ENCODE measurements at regions of chr3 and their contacts with region 1.

Region 1: GRCh38 chr3:141796081-141796888 is 33.1 kb downstream of the GRK7 start:
- DNase-seq: peak; percentile 80
- H3K4me3 Mint-ChIP-seq: peak overlapping the region; percentile 84
- H3K27ac Mint-ChIP-seq: peak overlapping the region; percentile 97
- H3K4me1 Mint-ChIP-seq: peaks cover 46% of the 10 kb centered on the region
- H3K27me3 Mint-ChIP-seq: peaks cover 3% of the 10 kb centered on the region

Region 2: DNA sequence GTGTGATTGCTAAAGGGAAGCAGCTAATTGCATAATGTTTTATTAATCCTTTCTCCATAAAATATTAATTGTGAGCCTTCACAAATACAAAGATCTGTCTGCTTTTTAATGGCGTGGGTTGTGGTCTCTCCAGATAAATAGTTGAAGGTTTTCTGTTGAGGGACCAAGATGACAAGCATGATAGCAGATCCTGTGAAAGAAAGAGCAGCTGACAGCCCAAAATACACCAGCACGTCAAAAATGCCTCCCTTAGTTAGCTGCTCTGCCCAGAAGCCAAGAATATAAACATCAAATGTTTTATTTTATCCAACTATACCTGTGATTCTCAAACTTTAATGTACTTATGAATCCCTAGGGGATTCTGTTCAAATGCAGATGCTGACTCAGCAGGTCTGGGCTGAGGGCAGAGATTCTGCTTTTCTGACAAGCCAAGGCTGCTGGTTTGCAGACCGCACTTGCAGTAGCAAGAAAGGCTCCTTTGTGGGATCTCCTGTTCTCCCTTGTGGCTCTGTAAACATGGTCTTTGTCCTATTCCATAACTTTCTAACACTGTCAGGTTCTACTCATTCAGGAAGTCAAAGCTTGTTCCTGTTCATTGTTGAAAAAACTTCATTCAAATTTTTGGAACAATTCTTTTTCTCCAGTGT is 973.8 kb before region 1 on chr3:
- CTCF ChIA-PET with region 1: no interaction called
- POLR2A ChIA-PET with region 1: no interaction called
- DNase-seq: no peak
- H3K4me3 Mint-ChIP-seq: no peak overlapping the region
- H3K27ac Mint-ChIP-seq: no peak overlapping the region
- H3K4me1 Mint-ChIP-seq: no peaks in the 10 kb centered on the region
- H3K27me3 Mint-ChIP-seq: no peaks in the 10 kb centered on the region

Region 3: GRCh38 chr3:141266797-141267555 is 529.3 kb before region 1 on chr3:
- CTCF ChIA-PET with region 1: no interaction called
- POLR2A ChIA-PET with region 1: no interaction called
- DNase-seq: peak; percentile 52
- H3K4me3 Mint-ChIP-seq: peak overlapping the region; percentile 76
- H3K27ac Mint-ChIP-seq: peak overlapping the region; percentile 92
- H3K4me1 Mint-ChIP-seq: peaks cover 43% of the 10 kb centered on the region
- H3K27me3 Mint-ChIP-seq: no peaks in the 10 kb centered on the region

Region 4: DNA sequence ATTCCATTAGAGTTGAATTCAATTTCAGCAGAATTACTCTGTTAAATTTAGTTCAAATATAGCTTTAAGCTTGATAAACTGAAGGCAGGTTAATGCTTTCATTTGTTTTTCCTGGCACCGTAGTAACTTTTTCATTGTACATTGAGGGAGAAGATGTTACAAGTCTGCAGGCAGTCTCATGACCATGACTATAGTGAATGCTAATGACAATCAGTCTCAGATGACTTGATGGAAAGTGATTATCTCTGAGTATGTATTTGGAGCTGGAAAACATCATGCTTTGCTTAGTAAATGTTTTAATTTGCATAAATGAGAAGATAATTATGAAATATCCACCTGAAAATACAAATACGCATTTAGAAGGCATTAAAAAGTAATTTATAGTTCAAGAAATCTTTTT is 74.2 kb before region 1 on chr3:
- CTCF ChIA-PET with region 1: no interaction called
- POLR2A ChIA-PET with region 1: no interaction called
- DNase-seq: no peak
- H3K4me3 Mint-ChIP-seq: no peak overlapping the region
- H3K27ac Mint-ChIP-seq: no peak overlapping the region
- H3K4me1 Mint-ChIP-seq: no peaks in the 10 kb centered on the region
- H3K27me3 Mint-ChIP-seq: peaks cover 8% of the 10 kb centered on the region

Region 5: DNA sequence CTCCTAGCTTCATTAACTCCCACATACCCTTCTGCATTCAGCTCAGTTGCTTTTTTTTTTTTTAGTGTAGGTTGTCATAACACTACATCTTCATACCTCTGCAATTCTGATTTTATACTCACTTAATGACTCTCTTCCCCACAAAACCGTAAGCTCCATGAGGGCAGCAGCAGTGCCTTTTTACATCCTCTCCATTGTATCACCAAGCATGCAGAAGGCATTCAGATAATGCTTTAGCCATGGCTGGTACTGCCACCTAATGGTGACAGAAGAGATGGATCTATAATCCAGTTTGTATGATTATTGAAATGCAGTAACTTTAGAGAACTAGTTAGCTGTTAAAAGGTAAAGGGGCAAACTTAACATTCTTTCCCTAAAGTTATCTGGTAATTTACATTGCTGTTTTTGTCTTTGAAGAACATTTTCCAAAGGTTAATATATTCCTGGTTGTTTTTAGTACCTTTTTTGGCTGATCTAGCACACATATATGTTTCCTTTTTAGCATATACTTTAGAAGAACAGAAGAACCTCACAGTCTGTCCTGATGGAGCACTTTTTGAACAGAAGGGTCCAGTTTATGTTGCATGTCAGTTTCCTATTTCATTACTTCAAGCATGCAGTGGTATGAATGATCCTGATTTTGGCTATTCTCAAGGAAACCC is 117.0 kb after region 1 on chr3:
- CTCF ChIA-PET with region 1: interaction called, 13 read pairs
- POLR2A ChIA-PET with region 1: no interaction called
- DNase-seq: peak; percentile 58
- H3K4me3 Mint-ChIP-seq: no peak overlapping the region
- H3K27ac Mint-ChIP-seq: no peak overlapping the region
- H3K4me1 Mint-ChIP-seq: peaks cover 4% of the 10 kb centered on the region
- H3K27me3 Mint-ChIP-seq: no peaks in the 10 kb centered on the region

Measured in activated CD4-positive, alpha-beta memory T cell treated with anti-CD3 and anti-CD28 coated beads, Interleukin-2, amount 10 ng/mL, durations not matched to agents 7 days and 5 days (primary cell).